ENCODE measurements at regions of chr7 and their contacts with region 1.

Region 1: GRCh38 chr7:128209229-128210035 is 31.6 kb upstream of the LEP start:
- DNase-seq: peak; percentile 51 to 62
- ATAC-seq: peak; percentile 73 to 88 (median 85)
- H3K4me3 ChIP-seq: no peak overlapping the region
- H3K27ac ChIP-seq: no peak overlapping the region
- H3K4me1 ChIP-seq: peaks cover 0 to 11% (median 0%) of the 10 kb centered on the region in 9 donors
- H3K27me3 ChIP-seq: peaks cover 0 to 86% (median 41%) of the 10 kb centered on the region in 7 donors
- CTCF ChIP-seq: peak; percentile 94 to 99 (median 98)

Region 2: GRCh38 chr7:127557803-127558202 is 651.6 kb before region 1 on chr7:
- intact Hi-C with region 1: loop called in 1 of 10 experiments (anchors 5 kb)
- DNase-seq: no peak
- ATAC-seq: no peak
- H3K4me3 ChIP-seq: no peak overlapping the region
- H3K27ac ChIP-seq: no peak overlapping the region
- H3K4me1 ChIP-seq: no peaks in the 10 kb centered on the region
- H3K27me3 ChIP-seq: no peaks in the 10 kb centered on the region
- CTCF ChIP-seq: peak in 4 of 9 donors; percentile 22 to 39 (median 30)

Region 3: DNA sequence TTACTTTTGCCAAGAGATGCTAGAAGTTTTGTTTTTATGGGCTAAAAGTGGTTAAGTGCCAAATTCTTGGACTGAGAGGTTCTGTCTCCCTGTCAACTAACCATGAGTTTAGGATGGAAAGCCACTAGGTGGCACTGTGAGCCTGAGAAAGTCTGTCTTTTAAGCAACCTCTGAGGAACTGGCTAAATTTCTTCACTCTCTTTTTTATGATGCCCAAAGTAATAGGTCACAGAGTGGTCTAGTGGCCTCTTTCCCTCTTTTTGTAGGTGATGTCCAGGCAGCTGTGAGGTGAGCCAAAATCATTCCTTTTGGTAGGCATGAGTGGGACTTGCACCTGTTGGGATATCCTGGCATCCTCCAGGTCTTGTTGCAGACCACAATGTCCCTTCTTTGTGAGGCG is 500.6 kb before region 1 on chr7:
- intact Hi-C with region 1: loop called (anchors 1 to 5 kb)
- DNase-seq: peak in 1 of 2 donors; percentile 81
- ATAC-seq: peak; percentile 71 to 89 (median 80)
- H3K4me3 ChIP-seq: no peak overlapping the region
- H3K27ac ChIP-seq: no peak overlapping the region
- H3K4me1 ChIP-seq: peaks cover 0 to 8% (median 0%) of the 10 kb centered on the region in 9 donors
- H3K27me3 ChIP-seq: no peaks in the 10 kb centered on the region
- CTCF ChIP-seq: peak; percentile 59 to 88 (median 80)

Region 4: DNA sequence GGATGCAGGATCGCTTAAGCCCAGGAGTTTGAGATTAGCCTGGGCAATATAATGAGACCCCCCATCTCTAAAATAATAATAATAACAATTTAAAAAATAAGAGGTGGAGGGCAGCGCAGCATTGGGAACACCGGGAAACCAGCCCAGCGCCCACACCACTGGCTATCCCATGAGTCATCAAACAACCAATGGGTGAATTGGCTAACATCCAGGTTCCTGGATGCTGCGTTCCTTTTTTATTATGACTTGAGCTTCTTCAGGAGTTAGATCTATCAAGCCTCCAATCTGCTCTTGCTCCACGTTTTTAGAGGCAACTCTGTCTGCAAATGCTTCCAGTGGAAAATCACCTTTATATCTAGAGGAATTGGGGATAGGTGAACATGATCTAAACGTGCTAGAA is 168.2 kb before region 1 on chr7:
- intact Hi-C with region 1: loop called in 6 of 10 experiments (anchors 5 to 10 kb)
- DNase-seq: no peak
- ATAC-seq: no peak
- H3K4me3 ChIP-seq: no peak overlapping the region
- H3K27ac ChIP-seq: no peak overlapping the region
- H3K4me1 ChIP-seq: peaks cover 0 to 15% (median 0%) of the 10 kb centered on the region in 9 donors
- H3K27me3 ChIP-seq: no peaks in the 10 kb centered on the region
- CTCF ChIP-seq: no peak

Region 5: DNA sequence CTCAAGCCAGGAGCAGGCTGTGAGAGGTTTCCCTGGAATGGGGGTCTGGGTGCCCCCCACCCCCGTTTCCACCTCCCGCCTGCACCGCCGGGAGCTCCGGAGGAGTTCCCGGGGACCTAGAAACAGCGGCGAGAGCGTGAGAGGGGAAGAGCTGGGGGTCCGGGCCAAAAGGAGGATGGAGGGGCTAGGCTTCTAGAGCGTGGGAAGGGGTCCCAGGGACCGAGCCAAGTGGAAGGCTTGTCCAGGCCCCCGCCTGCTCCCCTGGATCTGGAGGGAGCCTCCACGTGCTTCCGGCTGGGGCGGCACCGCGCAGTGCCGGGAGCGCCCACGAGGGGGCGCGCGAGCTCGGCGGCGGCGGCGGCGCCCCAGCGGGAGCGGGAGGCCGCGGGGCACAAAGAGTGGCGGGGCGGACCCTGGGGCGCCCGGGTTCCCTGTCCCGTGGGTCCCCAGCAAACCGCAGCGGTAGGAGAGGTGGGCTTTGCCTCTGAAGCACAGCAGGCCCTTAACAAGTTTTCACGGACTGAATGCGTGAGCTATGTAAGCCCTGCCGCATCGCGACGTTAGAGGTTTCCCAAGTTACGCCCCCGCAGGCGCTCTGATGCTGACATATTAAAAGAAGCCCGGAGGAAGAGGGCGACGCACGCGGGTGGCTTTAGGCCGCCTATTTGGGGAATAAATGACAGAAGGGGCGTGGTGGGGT is 73.8 kb before region 1 on chr7:
- intact Hi-C with region 1: loop called in 8 of 10 experiments (anchors 2 to 5 kb)
- DNase-seq: peak; percentile 34 to 51
- ATAC-seq: peak; percentile 83 to 96 (median 90)
- H3K4me3 ChIP-seq: peak overlapping the region; percentile 9 to 66 (median 59)
- H3K27ac ChIP-seq: no peak overlapping the region
- H3K4me1 ChIP-seq: peaks cover 4 to 39% (median 15%) of the 10 kb centered on the region in 9 donors
- H3K27me3 ChIP-seq: peaks cover 0 to 80% (median 55%) of the 10 kb centered on the region in 7 donors
- CTCF ChIP-seq: peak; percentile 71 to 100 (median 93)

Region 6: DNA sequence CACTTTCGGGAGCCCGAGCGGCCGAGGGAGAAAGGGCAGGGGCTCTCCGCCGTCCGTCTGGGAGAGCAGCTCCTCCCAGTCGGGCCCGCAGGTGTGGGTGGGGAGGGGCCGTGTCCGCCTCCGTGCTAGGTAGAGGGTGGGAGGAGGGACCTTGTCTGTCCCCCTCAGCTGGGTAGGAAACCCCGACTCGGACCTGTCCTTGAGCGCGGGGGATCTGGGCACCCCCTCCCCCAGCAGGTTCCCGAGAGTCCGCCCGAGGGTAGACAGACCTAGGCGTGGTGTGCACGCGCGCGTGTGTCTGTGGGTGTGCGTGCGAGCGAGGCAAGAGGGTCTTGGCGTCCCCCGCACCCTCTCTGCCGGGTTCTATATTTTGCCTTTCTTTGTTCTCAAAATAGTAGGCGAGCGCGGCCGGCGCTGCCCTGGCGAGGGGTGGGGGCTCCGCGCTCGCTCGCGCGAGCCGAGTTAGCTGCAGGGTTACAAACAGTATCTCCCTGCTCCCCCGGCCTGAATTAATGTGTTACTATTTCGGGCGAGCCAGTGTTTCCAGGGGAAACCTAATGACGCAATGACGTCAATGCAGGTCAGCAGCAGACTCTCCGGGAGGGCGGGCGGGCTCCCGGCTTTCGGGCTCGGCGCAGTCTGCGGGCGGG is 42.3 kb before region 1 on chr7:
- intact Hi-C with region 1: no loop called
- DNase-seq: no peak
- ATAC-seq: peak in 6 of 8 donors; percentile 15 to 53 (median 37)
- H3K4me3 ChIP-seq: peak overlapping the region; percentile 14 to 53 (median 45)
- H3K27ac ChIP-seq: no peak overlapping the region
- H3K4me1 ChIP-seq: peaks cover 6 to 26% (median 19%) of the 10 kb centered on the region in 9 donors
- H3K27me3 ChIP-seq: peaks cover 15 to 100% (median 99%) of the 10 kb centered on the region in 7 donors
- CTCF ChIP-seq: no peak